ENCODE measurements at regions of chr1 and their contacts with region 1.

Region 1: DNA sequence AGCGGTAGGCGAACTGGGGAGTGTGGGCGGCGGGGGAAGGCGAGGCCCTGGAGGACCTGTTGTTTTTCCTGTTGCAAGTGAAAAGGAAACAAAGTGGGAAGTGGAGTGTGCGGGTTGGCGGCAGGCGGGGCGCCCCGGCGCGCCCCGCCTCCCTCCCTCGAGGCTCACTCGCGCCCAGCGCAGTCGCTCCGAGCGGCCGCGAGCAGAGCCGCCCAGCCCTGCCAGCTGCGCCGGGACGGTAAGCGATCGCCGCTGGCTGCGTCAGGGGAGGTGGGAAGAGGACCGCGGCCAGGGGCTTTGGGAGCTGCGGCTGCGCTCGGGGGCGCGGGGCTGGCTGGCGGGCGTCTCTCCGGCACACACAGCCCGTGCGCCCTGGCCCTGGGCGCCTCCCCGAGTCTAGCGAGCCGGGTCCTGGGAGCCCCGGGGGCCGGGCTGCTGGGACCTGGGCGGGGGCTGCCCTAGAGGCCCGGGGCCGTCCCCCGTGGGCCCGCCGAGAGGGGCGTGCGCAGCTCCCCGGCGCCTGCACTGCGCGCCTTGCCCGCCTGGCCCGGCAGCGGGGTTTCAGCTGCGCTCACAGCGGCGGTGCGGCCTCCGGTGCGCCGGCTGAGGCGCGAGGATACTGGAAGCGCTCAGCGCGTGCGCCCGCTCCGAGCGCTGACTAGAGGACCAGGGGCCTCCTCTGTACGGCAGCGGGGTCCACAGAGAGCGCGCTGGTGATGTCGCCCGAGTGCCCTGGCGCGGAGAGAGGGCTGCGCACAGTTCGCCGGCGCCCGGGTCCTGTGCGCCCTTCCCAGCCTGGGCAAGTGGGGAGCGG is at the start of gene PIK3CD:
- DNase-seq: peak; percentile 63
- H3K4me3 Mint-ChIP-seq: peak within 1 kb of the TSS; percentile 99
- H3K27ac Mint-ChIP-seq: peak within 1 kb of the TSS; percentile 100
- H3K4me1 Mint-ChIP-seq: peaks cover 46% of the 10 kb centered on the region
- H3K27me3 Mint-ChIP-seq: no peaks in the 10 kb centered on the region
- total RNA-seq, gene PIK3CD: 96.6 to 101 TPM

Region 2: DNA sequence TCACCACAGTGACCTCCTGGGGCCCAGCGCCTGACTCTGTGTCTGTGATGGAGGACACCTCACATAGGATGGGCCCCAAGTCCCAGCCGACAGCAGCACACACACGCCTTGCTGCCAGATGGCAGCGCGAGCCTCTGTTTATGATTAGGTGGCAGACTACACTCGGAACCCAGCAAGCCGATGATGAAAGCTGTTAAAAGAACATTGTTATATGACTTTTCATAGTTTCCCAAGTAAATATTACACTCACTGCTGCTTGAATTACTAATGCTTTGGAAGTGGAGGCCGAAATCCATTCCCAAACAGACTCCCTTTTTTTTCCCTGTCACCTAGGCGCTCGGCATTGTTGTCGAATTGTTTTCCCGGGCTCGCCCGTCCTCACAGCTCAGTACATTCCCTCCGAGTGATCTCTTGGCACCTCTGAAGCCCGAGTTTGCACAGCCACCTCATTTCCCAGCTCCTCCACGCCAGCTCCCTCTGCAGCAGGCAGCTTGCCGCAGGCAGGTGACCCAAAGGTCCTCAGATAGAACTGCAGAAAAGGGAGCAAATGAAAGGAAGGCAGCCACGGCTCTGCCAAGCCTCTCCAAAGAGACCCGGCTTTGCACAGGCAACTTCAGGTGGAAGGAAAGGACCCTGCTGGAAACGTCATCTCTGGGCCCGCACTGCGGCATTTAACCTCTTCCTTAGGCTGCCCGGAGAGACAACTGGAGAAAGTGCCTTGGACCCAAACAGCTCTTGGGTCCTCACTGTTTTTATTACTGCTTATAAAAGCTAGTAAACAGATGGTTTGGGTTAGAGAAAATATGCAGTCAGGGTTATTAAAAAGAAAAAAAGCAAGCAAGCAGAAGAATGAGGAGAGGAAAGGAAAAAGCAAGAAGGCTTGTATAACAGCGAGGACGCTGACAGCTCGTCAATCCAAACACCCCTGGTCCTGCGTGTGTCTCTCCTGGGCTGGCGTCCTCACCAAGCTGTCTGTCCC is 184.7 kb before region 1 on chr1:
- CTCF ChIA-PET with region 1: no interaction called
- intact Hi-C with region 1: no loop called
- DNase-seq: no peak
- H3K4me3 Mint-ChIP-seq: no peak overlapping the region
- H3K27ac Mint-ChIP-seq: no peak overlapping the region
- H3K4me1 Mint-ChIP-seq: no peaks in the 10 kb centered on the region
- H3K27me3 Mint-ChIP-seq: no peaks in the 10 kb centered on the region

Region 3: GRCh38 chr1:9573723-9574122 is 78.0 kb before region 1 on chr1:
- CTCF ChIA-PET with region 1: no interaction called
- intact Hi-C with region 1: no loop called
- DNase-seq: no peak
- H3K4me3 Mint-ChIP-seq: no peak overlapping the region
- H3K27ac Mint-ChIP-seq: no peak overlapping the region
- H3K4me1 Mint-ChIP-seq: no peaks in the 10 kb centered on the region
- H3K27me3 Mint-ChIP-seq: no peaks in the 10 kb centered on the region

Region 4: DNA sequence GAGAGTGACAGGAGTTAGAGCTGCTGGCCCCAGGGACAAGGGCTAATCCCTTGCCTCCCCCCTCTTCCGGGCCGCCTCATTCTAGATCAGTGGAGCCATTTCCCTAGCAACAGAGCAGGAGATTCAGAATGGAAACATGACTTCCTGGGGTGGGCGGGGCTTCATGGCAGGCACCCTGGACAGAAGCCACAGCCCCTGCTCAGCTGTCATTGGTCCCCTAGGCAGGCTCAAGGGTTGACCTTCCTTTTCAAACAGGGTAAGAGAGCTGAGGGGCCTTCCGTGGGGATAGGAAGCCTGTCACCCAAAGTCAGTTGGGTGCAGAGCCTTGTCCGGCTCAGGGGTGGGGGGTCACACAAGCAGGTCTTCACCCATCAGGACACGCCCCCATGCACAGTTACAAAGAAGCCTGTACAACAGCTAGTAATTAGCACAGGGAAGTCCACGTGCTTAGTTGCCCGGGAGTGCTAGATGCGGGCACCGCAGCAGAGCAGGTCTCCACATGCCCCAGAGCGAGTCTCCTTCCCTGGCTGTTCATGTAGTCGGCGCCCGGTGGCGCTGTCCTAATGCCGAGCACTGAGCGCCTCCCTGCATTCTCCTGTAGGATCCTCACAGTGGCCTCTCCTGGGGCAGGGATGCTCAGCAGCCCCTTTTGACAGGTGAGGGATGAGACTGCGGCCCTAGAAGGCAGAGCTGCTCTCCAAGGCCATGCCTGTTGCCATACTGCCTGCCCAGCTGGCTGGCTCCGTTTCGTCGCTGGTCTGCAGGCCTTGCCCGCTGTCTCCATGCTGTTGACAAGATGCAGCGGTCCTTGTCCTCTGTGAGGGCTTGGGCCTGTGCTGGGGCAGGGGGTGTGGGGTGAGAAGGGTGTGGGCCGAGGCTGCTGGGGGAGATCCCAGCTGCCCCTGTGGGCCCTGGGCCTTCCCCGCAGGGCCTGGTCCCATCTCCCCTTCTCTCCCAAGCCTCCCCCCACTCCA is 58.0 kb before region 1 on chr1:
- CTCF ChIA-PET with region 1: no interaction called
- intact Hi-C with region 1: no loop called
- DNase-seq: peak; percentile 79
- H3K4me3 Mint-ChIP-seq: no peak overlapping the region
- H3K27ac Mint-ChIP-seq: no peak overlapping the region
- H3K4me1 Mint-ChIP-seq: peaks cover 36% of the 10 kb centered on the region
- H3K27me3 Mint-ChIP-seq: no peaks in the 10 kb centered on the region

Region 5: GRCh38 chr1:9671377-9672140 is 19.8 kb after region 1 on chr1:
- CTCF ChIA-PET with region 1: interaction called, 9 read pairs
- intact Hi-C with region 1: loop called (anchors 1 kb)
- DNase-seq: peak; percentile 59
- H3K4me3 Mint-ChIP-seq: peak overlapping the region; percentile 24
- H3K27ac Mint-ChIP-seq: peak overlapping the region; percentile 86
- H3K4me1 Mint-ChIP-seq: peaks cover 77% of the 10 kb centered on the region
- H3K27me3 Mint-ChIP-seq: no peaks in the 10 kb centered on the region

Region 6: GRCh38 chr1:9689011-9689706 is 37.4 kb after region 1 on chr1:
- CTCF ChIA-PET with region 1: interaction called, 10 read pairs
- intact Hi-C with region 1: loop called (anchors 1 kb)
- DNase-seq: peak; percentile 83
- H3K4me3 Mint-ChIP-seq: peak overlapping the region; percentile 67
- H3K27ac Mint-ChIP-seq: peak overlapping the region; percentile 46
- H3K4me1 Mint-ChIP-seq: peaks cover 69% of the 10 kb centered on the region
- H3K27me3 Mint-ChIP-seq: no peaks in the 10 kb centered on the region

Region 7: GRCh38 chr1:9717193-9718005 is 65.6 kb after region 1 on chr1:
- CTCF ChIA-PET with region 1: interaction called, 5 read pairs
- intact Hi-C with region 1: loop called (anchors 1 kb)
- DNase-seq: peak; percentile 95
- H3K4me3 Mint-ChIP-seq: peak overlapping the region; percentile 90
- H3K27ac Mint-ChIP-seq: peak overlapping the region; percentile 90
- H3K4me1 Mint-ChIP-seq: peaks cover 70% of the 10 kb centered on the region
- H3K27me3 Mint-ChIP-seq: no peaks in the 10 kb centered on the region

Region 8: GRCh38 chr1:9900142-9901043 is 248.6 kb after region 1 on chr1:
- CTCF ChIA-PET with region 1: no interaction called
- intact Hi-C with region 1: loop called (anchors 5 kb)
- DNase-seq: peak; percentile 13
- H3K4me3 Mint-ChIP-seq: peak overlapping the region; percentile 3
- H3K27ac Mint-ChIP-seq: no peak overlapping the region
- H3K4me1 Mint-ChIP-seq: peaks cover 39% of the 10 kb centered on the region
- H3K27me3 Mint-ChIP-seq: no peaks in the 10 kb centered on the region

Measured in activated naive CD4-positive, alpha-beta T cell treated with anti-CD3 and anti-CD28 coated beads for 36 hours (primary cell).